Dendritic cell treated with granulocyte-macrophage colony-stimulating factor and Interleukin-4, amounts not matched to agents 40 ng/mL and 50 ng/mL, for 4 days (primary cell): ENCODE measurements at regions of chr13 and their contacts with region 1.

Region 1: GRCh38 chr13:97432917-97433726 is 847 bp upstream of the RAP2A start:
- H3K4me3 Mint-ChIP-seq: peak overlapping the region; percentile 97
- H3K27ac Mint-ChIP-seq: peak overlapping the region; percentile 96
- H3K4me1 Mint-ChIP-seq: peaks cover 49% of the 10 kb centered on the region
- H3K27me3 Mint-ChIP-seq: no peaks in the 10 kb centered on the region

Region 2: DNA sequence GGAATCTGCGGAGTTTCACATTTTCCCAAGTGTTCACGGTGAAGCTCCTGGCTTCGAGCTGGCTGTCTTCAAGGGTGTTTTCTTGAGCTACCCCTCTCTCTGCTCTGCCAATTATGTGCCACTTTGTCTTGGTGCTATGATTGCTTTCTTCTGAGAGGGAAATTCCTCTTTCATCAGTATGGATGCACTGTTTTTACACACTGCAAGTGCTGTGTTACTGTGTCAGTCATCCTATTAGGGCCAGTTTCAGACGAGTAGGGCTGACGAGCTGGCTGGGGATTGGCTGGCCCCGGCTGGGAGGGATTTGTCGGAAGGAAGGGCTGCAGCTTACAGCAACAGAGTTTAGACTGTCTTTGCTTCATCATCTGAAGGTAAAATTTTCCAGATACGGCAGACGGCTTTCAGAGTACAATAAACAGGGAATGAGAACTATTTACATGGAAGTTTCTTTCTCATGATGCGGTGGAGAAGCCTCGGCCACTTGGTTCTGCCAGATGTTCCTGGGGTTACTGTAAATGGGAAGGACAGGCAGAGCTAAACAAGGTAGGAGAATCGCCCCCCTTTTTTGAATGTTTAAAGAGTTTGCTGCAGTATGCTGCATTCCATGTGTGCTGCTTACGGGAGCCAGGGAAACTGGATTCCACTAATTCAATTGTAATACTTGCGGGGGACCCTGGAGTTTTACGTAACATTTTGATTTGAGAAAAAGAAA is 211.0 kb before region 1 on chr13 and contains the start of gene MBNL2:
- intact Hi-C with region 1: loop called (anchors 2 kb)
- H3K4me3 Mint-ChIP-seq: peak within 1 kb of the TSS; percentile 81
- H3K27ac Mint-ChIP-seq: peak within 1 kb of the TSS; percentile 81
- H3K4me1 Mint-ChIP-seq: peaks cover 35% of the 10 kb centered on the region
- H3K27me3 Mint-ChIP-seq: peaks cover 10% of the 10 kb centered on the region

Region 3: DNA sequence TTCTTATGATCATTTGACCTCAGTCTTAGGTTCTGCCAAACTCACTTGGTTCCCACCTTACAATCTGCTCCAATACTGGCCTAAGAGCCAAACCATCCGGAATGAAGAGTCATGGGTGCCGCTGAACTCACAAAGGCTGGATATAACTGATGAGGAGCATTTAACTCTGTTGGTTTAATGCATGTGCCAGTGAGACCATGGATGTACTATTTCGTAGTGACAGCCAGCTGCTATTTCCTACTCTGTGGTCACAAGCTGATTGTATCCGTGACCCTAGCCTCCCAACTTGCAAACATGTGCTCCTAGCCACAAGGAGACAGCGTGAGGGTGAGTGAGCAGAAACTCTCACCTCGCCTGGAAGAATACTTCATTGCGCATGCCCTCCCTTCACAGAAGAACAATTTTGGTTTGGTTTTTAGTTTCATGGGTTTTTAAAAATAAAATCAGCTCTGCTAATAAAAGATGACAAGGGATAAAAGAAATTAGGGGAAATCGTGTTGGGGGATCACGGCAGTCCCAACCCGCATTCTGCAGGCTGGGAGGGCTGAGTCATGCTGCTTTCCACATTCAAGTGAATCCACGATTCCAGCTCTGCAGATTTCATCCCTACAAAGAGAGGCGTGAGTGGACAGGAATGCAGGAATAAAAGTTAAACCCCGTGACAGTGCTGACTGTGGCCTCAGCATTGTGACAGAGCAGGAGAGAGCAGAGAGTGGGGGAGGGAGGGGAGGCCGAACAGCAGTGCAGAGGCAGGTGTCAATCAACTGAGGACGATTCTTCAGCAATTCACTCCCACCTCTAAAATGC is 65.9 kb before region 1 on chr13:
- intact Hi-C with region 1: loop called (anchors 5 kb)
- H3K4me3 Mint-ChIP-seq: peak overlapping the region; percentile 24
- H3K27ac Mint-ChIP-seq: peak overlapping the region; percentile 49
- H3K4me1 Mint-ChIP-seq: peaks cover 40% of the 10 kb centered on the region
- H3K27me3 Mint-ChIP-seq: no peaks in the 10 kb centered on the region

Region 4: DNA sequence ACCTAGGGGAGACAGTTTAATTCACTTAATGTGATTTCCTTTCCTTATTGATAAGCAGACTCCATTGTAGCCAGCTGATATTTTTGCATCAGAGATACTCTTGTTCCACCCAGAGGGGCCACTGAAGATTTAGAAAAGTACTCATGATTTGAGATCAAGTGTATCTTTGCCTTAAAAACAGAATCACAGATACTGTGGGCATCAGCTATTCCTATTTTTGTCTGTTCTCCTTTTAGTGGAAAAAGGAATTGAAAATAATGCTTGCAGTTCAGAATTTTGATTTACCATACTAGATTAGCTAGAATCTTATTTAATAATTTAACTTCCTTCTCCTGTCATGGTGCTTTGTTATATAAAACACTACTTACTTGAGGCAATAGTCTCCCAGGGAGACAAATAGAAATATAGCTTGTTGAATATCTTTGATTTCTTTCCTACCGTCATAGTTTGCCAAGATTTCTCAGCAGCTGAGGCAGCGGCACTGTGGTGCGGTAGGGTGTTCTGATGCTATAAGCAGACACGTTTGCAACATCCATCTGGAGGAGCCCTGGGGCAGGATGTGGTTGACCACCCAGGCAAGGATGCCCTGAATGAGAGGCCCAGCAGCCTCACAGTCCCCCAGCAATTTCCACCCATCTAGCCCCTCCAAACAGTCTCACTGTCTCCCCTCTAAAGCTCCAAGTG is 46.2 kb before region 1 on chr13:
- intact Hi-C with region 1: loop called (anchors 1 kb)
- H3K4me3 Mint-ChIP-seq: peak overlapping the region; percentile 59
- H3K27ac Mint-ChIP-seq: peak overlapping the region; percentile 99
- H3K4me1 Mint-ChIP-seq: peaks cover 64% of the 10 kb centered on the region
- H3K27me3 Mint-ChIP-seq: no peaks in the 10 kb centered on the region

Region 5: DNA sequence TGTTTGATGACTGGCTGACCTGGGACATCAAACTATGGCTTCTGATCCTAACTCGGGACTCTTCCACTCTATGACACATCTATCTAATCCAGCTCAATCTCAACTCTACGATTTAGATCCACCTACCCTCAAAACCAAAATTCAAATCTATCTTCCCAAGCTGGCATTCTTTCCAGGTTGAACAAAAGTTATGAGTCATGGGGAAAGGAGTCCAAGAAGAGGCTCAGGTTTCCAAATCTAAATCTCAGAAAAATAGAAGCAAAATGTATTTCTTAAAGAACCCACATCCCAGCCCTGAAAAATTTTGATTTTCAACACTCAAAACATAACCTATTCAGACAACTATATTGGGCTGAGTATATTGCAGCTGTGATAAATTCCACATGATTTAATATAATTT is 376.5 kb after region 1 on chr13:
- intact Hi-C with region 1: loop called (anchors 10 kb)
- H3K4me3 Mint-ChIP-seq: no peak overlapping the region
- H3K27ac Mint-ChIP-seq: no peak overlapping the region
- H3K4me1 Mint-ChIP-seq: no peaks in the 10 kb centered on the region
- H3K27me3 Mint-ChIP-seq: no peaks in the 10 kb centered on the region